ENCODE measurements at regions of chr1 and their contacts with region 1.

Region 1: GRCh38 chr1:228405987-228406265 is 709 bp downstream of the TRIM11 start:
- DNase-seq: no peak
- H3K4me3 ChIP-seq: peak overlapping the region; percentile 95
- H3K27ac ChIP-seq: peak overlapping the region; percentile 77
- H3K4me1 ChIP-seq: peaks cover 45% of the 10 kb centered on the region
- H3K27me3 ChIP-seq: no peaks in the 10 kb centered on the region
- CTCF ChIP-seq: no peak

Region 2: GRCh38 chr1:228340686-228341449 is 65.1 kb before region 1 on chr1:
- CTCF ChIA-PET with region 1: no interaction called
- POLR2A ChIA-PET with region 1: no interaction called
- intact Hi-C with region 1: no loop called
- DNase-seq: no peak
- H3K4me3 ChIP-seq: no peak overlapping the region
- H3K27ac ChIP-seq: no peak overlapping the region
- H3K4me1 ChIP-seq: no peaks in the 10 kb centered on the region
- H3K27me3 ChIP-seq: no peaks in the 10 kb centered on the region
- CTCF ChIP-seq: peak; percentile 35

Region 3: DNA sequence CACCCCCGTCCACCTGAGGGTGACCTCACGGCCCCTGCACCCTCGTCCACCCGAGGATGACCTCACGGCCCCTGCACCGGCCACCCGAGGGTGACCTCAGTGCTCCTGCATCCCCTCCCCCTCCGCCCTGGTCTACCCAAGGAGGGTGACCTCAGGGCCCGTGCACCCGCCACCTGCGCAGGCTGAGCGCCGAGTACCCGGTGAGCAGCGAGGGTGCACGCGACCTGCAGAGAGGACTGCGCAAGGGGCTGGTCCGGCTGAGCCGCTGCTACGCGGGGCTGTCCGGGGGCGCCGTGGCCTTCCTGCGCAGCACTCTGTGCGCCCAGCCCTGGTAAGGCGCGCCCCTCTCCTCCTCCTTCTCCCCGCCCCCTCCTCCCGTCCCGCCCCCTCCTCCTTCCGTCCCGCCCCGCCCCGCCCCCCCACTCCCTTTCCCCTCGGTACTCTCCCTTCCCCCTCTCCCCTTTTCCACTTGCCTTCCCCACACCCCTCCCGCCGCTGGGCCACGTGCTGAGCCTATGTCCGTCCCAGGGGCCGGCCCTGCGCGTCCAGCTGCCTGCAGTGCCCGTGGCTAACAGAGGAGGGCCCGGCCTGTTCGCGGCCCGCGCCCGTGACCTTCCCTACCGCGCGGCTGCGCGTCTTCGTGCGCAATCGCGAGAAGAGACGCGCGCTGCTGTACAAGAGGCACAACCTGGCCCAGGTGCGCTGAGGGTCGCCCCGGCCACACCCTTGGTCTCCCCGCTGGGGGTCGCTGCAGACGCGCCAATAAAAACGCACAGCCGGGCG is 27.6 kb before region 1 on chr1:
- CTCF ChIA-PET with region 1: interaction called, 3 read pairs
- POLR2A ChIA-PET with region 1: interaction called, 3 read pairs
- intact Hi-C with region 1: loop called (anchors 2 kb)
- DNase-seq: peak; percentile 78 to 95
- H3K4me3 ChIP-seq: peak overlapping the region; percentile 67
- H3K27ac ChIP-seq: no peak overlapping the region
- H3K4me1 ChIP-seq: peaks cover 15% of the 10 kb centered on the region
- H3K27me3 ChIP-seq: no peaks in the 10 kb centered on the region
- CTCF ChIP-seq: peak; percentile 82

Region 4: GRCh38 chr1:228423404-228424053 is 17.6 kb after region 1 on chr1:
- CTCF ChIA-PET with region 1: no interaction called
- POLR2A ChIA-PET with region 1: no interaction called
- intact Hi-C with region 1: no loop called
- DNase-seq: no peak
- H3K4me3 ChIP-seq: no peak overlapping the region
- H3K27ac ChIP-seq: no peak overlapping the region
- H3K4me1 ChIP-seq: peaks cover 43% of the 10 kb centered on the region
- H3K27me3 ChIP-seq: no peaks in the 10 kb centered on the region
- CTCF ChIP-seq: no peak

Region 5: GRCh38 chr1:228434686-228435085 is 28.8 kb after region 1 on chr1:
- CTCF ChIA-PET with region 1: no interaction called
- POLR2A ChIA-PET with region 1: interaction called, 22 read pairs
- intact Hi-C with region 1: no loop called
- DNase-seq: no peak
- H3K4me3 ChIP-seq: no peak overlapping the region
- H3K27ac ChIP-seq: no peak overlapping the region
- H3K4me1 ChIP-seq: peaks cover 12% of the 10 kb centered on the region
- H3K27me3 ChIP-seq: no peaks in the 10 kb centered on the region
- CTCF ChIP-seq: no peak

Region 6: DNA sequence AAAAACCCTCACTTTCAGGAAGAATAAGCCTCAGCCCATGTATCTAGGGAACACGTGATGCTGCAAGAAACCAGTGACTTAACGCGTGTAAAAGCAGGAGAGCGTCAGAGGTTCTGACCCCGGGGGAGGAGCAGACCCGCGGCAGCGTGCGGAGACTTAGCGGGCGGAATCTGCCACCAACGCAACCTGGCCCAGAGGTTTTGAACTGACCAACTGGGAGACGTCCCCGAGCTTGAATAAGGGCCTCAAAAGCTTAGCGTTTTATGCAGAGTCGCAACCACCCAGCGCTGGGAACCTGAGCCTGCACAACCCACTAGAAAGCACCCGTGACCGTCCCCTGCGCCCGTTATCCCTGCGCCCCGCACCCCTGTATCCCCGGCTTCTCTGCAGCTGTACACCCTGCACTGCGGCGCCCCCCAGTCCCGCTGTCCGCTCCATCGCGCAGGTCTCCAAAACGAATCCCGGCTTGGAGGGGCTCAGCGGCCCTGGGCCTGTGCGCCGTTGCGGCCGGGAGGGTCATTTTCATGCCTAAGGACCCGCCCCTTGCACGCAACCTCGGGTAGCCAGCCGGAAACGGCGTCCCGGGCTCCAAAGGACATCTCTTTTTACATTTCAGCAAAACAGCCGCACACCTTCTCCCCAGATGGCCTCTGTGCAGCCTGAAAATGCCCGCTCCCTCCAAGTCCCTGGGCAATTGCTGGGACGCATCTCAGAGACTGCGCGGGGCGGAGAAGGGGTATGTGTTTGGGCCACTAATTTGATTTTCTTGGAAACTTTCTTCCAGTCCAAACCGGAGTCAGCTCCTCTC is 40.1 kb after region 1 on chr1:
- CTCF ChIA-PET with region 1: no interaction called
- POLR2A ChIA-PET with region 1: no interaction called
- intact Hi-C with region 1: no loop called
- DNase-seq: peak in 1 of 2 experiments; percentile 18
- H3K4me3 ChIP-seq: no peak overlapping the region
- H3K27ac ChIP-seq: no peak overlapping the region
- H3K4me1 ChIP-seq: peaks cover 15% of the 10 kb centered on the region
- H3K27me3 ChIP-seq: no peaks in the 10 kb centered on the region
- CTCF ChIP-seq: no peak

Region 7: DNA sequence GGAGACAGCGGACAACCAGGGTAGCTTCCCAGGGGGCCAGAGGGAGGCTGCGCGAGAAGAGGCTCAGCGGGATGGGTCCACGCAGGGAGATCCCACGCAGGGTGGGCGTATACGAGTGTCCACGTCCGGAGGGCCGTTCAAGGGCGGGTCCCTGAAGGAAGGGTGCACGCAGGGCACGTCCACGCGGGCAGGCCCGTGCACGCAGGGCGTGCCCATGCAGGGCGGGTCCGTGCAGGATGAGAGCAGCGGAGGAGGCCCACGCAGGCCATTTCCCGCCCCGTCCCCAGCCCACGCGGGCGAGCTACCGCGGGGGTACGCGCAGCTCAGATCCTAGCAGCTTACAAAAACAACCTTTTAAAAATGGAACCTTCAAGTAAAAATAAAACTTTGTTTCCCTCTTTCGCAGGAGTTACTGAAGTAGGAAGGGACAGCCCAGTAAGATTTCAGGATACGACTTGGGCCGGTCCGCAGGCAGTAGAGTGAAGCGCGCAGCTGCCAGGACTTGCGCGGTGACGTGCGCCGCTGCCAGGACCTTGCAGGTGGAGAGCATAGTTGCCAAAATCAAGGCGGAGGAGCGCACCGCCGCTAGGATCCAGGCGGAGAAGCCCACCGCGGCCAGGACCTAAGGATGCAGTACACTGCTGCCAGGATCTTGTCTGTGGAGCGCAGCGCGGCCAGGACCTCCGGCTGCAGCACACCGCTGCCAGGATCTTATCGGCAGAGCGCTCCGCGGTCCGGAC is 80.8 kb after region 1 on chr1:
- CTCF ChIA-PET with region 1: no interaction called
- POLR2A ChIA-PET with region 1: interaction called, 19 read pairs
- intact Hi-C with region 1: loop called (anchors 2 kb)
- DNase-seq: peak; percentile 80 to 94
- H3K4me3 ChIP-seq: peak overlapping the region; percentile 96
- H3K27ac ChIP-seq: peak overlapping the region; percentile 76
- H3K4me1 ChIP-seq: peaks cover 34% of the 10 kb centered on the region
- H3K27me3 ChIP-seq: no peaks in the 10 kb centered on the region
- CTCF ChIP-seq: no peak

Measured in PC-9 (cell line).